Calu3 (cell line): ENCODE measurements at regions of chr3 and their contacts with region 1.

Region 1: GRCh38 chr3:73547427-73548248 is 77.1 kb downstream of the PDZRN3 start:
- DNase-seq: no peak
- H3K4me3 Mint-ChIP-seq: no peak overlapping the region
- H3K27ac Mint-ChIP-seq: no peak overlapping the region
- H3K4me1 Mint-ChIP-seq: no peaks in the 10 kb centered on the region
- H3K27me3 Mint-ChIP-seq: no peaks in the 10 kb centered on the region
- CTCF ChIP-seq: no peak

Region 2: GRCh38 chr3:73572368-73572767 is 24.7 kb after region 1 on chr3:
- CTCF ChIA-PET with region 1: no interaction called
- intact Hi-C with region 1: loop called (anchors 1 kb)
- DNase-seq: no peak
- H3K4me3 Mint-ChIP-seq: no peak overlapping the region
- H3K27ac Mint-ChIP-seq: no peak overlapping the region
- H3K4me1 Mint-ChIP-seq: no peaks in the 10 kb centered on the region
- H3K27me3 Mint-ChIP-seq: no peaks in the 10 kb centered on the region
- CTCF ChIP-seq: no peak

Region 3: GRCh38 chr3:73592154-73593144 is 44.8 kb after region 1 on chr3:
- CTCF ChIA-PET with region 1: no interaction called
- intact Hi-C with region 1: no loop called
- DNase-seq: no peak
- H3K4me3 Mint-ChIP-seq: no peak overlapping the region
- H3K27ac Mint-ChIP-seq: no peak overlapping the region
- H3K4me1 Mint-ChIP-seq: no peaks in the 10 kb centered on the region
- H3K27me3 Mint-ChIP-seq: no peaks in the 10 kb centered on the region
- CTCF ChIP-seq: no peak